Psoas muscle (tissue), 8 donors: ENCODE measurements at regions of chr2 and their contacts with region 1.

Region 1: DNA sequence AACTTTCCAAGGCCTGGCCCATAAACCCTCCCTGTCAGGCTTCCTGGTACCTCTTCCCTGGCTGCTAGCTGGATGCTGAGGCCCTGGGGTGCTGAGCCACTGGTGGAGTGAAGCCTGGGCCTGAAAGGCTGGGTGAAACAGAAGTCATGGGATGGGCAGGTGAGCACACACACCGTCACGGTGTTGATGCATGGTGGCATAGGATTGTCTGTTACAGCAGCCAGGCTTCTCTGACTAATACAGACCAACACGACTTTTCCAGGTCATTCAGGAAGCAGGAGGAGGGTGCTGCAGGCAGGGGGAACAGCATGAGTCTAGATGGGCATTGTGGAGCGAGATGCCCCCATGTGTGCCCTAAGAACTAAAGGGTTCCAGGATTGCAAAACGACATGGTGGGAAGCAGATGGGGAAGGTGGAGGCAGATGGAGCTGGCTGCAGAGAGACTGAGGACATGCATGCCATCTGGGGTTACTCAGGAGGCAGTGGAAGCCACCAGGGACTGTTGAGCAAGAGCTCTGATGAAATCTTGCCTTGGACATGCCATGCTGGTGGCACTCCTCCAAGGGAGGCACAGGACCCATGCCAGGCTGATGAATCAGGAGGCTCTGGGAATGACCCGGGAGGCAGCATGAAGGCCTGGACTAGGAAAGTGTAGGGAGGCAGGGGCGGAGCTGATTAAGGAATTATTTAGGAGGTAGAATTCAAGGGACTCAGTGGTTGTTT is 480.9 kb downstream of the TSN start:
- DNase-seq: peak; percentile 19 to 57
- ATAC-seq: peak; percentile 23 to 66 (median 30)
- H3K4me3 ChIP-seq: no peak overlapping the region
- H3K27ac ChIP-seq: no peak overlapping the region
- H3K4me1 ChIP-seq: no peaks in the 10 kb centered on the region
- H3K27me3 ChIP-seq: peaks cover 0 to 3% (median 0%) of the 10 kb centered on the region in 3 donors
- CTCF ChIP-seq: no peak

Region 2: DNA sequence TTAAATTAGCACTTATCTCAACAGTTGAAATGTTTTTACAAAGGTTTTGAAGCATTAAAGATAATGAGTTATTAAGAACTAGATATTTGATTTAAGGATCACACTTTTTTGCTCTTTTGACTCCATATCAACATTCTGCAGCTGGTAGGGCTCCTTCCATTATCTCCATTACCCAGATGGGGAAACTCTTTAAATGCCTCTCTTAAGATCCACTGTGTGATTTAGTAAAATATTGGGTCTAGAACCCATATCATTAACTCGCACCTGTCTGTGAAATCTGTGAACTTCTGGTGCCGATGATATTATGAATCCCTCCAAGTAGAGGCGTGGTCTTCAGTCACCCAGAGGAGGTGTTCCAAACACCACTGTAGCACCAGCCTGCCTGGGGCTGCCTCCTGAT is 14.6 kb before region 1 on chr2:
- intact Hi-C with region 1: loop called in 1 of 2 experiments (anchors 1 kb)
- DNase-seq: no peak
- ATAC-seq: no peak
- H3K4me3 ChIP-seq: no peak overlapping the region
- H3K27ac ChIP-seq: no peak overlapping the region
- H3K4me1 ChIP-seq: no peaks in the 10 kb centered on the region
- H3K27me3 ChIP-seq: no peaks in the 10 kb centered on the region
- CTCF ChIP-seq: no peak